ENCODE measurements at regions of chr15 and their contacts with region 1.

Region 1: DNA sequence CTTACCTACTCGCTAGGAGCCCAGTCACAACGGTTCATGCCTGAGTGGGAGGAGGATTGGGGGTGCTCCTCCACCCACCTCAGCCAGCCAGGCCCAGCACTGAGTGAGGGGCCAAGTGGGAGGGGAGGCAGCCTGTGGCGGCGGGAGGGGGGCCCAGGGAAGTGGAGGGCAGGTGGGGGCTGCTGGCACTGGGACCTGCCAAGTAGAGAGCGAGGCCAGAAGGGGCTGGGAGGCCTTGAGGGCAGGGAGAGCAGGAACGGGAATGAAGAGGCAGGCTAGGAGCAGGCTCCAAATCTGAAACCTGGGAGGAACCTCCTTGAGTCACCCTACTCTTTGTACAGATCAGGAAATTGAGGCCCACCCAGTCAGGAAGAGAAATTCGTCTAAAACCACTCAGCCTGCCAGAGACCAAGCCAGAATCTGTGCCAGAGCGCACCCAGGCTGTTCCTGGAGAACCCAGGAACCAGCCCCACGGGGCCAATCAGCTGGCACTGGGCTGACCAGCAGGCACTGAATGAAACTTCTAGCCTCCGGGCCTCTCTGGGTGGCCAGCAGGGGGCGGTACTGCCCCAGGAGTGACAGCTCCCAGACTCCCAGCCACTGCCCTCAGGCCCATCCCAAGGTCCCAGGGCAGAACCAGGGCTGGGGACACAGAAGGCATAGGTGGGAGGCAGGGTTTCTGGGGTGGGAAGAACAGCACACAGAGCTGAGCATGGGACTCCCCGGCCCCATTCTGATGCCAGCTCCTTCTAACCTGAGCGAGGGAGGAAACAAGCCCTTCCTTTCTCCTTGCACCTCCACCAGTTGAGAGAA is 14.8 kb upstream of the CYP11A1 start:
- DNase-seq: peak; percentile 86
- H3K4me3 ChIP-seq: no peak overlapping the region
- H3K27ac ChIP-seq: no peak overlapping the region
- H3K4me1 ChIP-seq: peaks cover 40% of the 10 kb centered on the region
- H3K27me3 ChIP-seq: peaks cover 6% of the 10 kb centered on the region
- CTCF ChIP-seq: peak; percentile 95

Region 2: DNA sequence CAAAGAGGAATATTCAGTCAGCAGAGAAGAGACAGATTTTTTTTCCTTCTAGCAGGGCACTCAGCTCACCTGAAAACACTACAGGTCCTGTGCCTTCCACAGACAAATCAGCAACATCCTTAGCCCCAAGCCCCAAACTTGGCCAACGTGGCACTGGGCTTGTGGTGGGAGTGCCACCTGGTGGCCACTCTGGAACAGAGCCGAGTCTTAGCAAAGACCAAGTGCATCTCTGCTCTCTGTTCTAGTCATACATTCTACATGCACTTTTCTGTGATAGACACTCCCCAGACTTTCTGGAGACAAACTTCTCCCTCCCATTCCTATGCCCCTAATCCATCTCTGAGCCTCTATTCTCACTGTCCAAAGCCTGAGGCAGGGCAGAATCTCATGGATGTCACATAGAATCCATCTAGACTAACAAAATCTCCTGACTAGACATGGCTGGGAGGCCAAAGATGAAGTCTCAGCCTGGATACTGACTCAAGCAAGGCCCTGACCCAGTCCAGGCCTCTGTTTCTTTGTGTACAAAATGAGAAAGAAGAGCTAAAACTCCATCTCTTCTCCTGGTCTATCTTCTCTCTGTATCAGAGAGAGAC is 56.6 kb after region 1 on chr15:
- intact Hi-C with region 1: loop called (anchors 5 kb)
- DNase-seq: peak; percentile 68
- H3K4me3 ChIP-seq: no peak overlapping the region
- H3K27ac ChIP-seq: no peak overlapping the region
- H3K4me1 ChIP-seq: peaks cover 8% of the 10 kb centered on the region
- H3K27me3 ChIP-seq: no peaks in the 10 kb centered on the region
- CTCF ChIP-seq: peak; percentile 97

Region 3: GRCh38 chr15:74489518-74490338 is 107.5 kb after region 1 on chr15:
- intact Hi-C with region 1: loop called (anchors 10 kb)
- DNase-seq: peak; percentile 42
- H3K4me3 ChIP-seq: no peak overlapping the region
- H3K27ac ChIP-seq: no peak overlapping the region
- H3K4me1 ChIP-seq: no peaks in the 10 kb centered on the region
- H3K27me3 ChIP-seq: no peaks in the 10 kb centered on the region
- CTCF ChIP-seq: peak; percentile 72

Measured in left ventricle myocardium inferior (tissue), 1 donor.